Ovary (tissue), 10 donors: ENCODE measurements at regions of chr18 and their contacts with region 1.

Region 1: DNA sequence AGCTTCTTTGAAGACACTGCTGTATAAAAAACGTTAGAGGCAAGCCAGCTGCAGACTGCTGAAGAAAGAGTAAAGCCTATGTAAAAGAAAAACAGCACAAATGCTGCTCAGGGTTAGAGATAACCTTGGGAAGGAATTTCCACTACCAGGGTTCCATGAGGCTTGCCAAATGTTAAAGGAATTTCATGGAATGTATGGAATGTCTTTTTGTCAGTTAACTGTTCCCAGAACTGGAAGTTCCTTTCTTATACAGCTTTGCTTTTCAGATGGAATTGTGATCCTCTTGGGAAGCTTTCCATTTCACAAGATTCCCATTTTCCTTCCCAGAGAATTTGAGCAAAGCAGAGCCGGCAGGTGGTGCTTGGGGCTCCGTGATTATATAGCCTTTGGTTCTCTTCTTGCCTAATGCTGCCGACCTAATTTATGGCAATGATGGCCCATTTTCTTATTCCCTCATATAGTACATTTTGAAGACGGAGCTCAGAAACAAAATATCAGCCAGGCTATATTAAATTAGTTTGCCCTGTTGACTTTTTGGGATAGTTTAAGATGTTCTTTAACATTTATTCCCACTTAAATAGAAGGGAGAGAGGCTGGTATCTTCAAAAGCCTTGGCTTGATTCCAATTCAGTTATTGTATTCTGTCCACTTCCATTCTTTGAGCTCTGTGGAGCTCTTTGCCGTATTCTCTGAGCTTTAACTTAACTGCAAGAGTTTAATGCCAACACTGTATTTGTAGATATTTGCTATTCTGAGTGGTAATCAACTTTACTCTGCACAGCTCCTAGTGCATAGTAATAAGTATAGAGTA is 162.3 kb downstream of the PHLPP1 start:
- DNase-seq: no peak
- H3K4me3 ChIP-seq: no peak overlapping the region
- H3K27ac ChIP-seq: no peak overlapping the region
- H3K4me1 ChIP-seq: no peaks in the 10 kb centered on the region
- H3K27me3 ChIP-seq: no peaks in the 10 kb centered on the region
- CTCF ChIP-seq: no peak
- EP300 ChIP-seq: no peak
- POLR2A ChIP-seq: no peak

Region 2: GRCh38 chr18:62838475-62839098 is 39.0 kb before region 1 on chr18:
- intact Hi-C with region 1: loop called in 1 of 4 experiments (anchors 5 kb)
- DNase-seq: no peak
- H3K4me3 ChIP-seq: no peak overlapping the region
- H3K27ac ChIP-seq: no peak overlapping the region
- H3K4me1 ChIP-seq: no peaks in the 10 kb centered on the region
- H3K27me3 ChIP-seq: no peaks in the 10 kb centered on the region
- CTCF ChIP-seq: no peak
- EP300 ChIP-seq: no peak
- POLR2A ChIP-seq: no peak